Activated CD4-positive, alpha-beta T cell treated with anti-CD3 and anti-CD28 coated beads, Interleukin-2, amount 10 ng/mL, durations not matched to agents 24 days and 14 days (primary cell): ENCODE measurements at regions of chr10 and their contacts with region 1.

Region 1: GRCh38 chr10:119207367-119207668 is at the start of gene GRK5:
- DNase-seq: peak; percentile 99
- H3K4me3 Mint-ChIP-seq: peak within 1 kb of the TSS; percentile 92
- H3K27ac Mint-ChIP-seq: peak within 1 kb of the TSS; percentile 98
- H3K4me1 Mint-ChIP-seq: peaks cover 38% of the 10 kb centered on the region
- H3K27me3 Mint-ChIP-seq: no peaks in the 10 kb centered on the region
- total RNA-seq, gene GRK5: 25.6 and 27.3 TPM in 2 replicates

Region 2: DNA sequence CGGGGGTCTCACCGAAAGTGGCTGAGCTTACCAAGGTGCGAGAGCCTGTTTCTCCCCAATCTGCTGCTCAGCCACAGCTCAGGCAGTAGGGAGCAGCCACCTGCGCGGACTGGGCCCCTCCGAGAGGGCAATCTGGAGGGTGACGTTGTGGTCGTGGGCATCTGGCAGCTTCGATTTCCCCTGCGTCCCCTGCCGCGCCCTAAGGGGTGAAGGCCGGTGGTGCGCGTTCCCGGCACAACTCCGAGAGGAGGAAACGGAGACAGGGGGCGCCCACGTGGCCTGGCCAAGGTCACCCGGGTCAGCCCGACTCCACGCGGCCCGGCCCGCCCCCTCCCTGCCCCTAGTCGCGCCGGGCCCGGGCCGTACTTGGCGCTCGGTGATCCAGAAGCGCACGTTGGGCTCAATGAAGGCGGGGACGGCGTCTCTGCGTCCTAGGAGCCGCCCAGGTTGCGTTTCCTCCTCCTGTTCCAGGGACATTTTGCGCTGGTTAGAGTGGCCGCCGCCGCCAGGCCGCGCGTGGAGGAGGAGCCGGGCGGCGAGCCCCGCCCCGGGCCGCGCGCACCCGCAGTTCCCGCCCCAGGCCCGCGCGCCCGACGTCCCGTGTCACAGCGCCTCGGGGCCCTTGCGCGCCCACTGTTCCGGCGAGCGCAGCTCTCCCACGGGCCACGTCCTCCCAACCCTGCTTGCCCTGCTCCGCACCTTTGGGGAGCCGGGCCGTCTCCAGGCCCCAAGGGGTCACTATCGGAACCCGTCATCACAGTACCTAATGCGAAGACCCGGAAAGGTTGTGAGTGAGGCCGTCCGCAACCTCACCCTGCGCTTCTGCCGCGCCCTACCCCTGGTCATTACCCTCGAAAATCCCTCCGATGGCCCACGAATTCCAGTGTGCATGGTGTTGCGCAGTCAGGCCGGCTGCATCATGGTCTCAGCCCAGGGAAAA is 41.9 kb before region 1 on chr10 and contains the start of gene SFXN4:
- intact Hi-C with region 1: loop called (anchors 1 kb)
- DNase-seq: peak; percentile 96
- H3K4me3 Mint-ChIP-seq: peak within 1 kb of the TSS; percentile 90
- H3K27ac Mint-ChIP-seq: peak within 1 kb of the TSS; percentile 95
- H3K4me1 Mint-ChIP-seq: peaks cover 35% of the 10 kb centered on the region
- H3K27me3 Mint-ChIP-seq: no peaks in the 10 kb centered on the region
- total RNA-seq, gene SFXN4: 58.1 and 63.0 TPM in 2 replicates

Region 3: DNA sequence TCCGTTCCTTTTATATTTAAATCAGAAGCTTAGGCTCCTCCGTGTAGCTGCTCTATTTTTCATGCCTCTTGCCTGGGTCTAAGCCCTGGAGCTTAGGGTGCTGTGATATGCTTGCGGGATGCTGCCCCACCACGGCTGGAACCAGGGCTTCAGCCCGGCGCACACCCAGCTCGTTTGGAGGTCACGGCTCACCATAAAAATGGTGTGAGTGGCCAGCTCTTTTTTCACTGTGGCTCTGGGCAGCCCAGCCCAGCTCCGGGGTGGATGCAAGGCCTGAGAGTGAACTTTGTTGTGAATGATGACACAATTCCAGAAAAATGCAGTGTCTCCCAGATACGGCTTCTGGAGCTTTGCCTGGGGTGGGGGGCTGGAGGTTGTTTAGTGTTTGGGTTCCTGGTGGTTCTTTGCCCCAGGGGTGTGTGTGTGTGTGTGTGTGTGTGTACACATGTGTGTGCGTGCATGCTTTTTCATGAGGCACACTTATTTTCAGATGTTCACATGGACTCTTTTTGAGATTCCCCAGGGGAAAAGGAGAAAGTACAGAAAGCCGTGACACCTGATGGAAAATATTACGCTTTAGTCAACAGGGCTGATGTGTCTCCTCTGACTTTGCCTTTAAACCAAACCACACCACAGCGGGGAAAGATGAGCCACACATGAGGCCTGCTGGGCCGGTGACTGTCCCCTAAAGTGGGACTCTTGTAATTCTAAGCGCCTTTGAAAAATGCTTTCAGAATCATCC is 46.3 kb after region 1 on chr10:
- intact Hi-C with region 1: loop called (anchors 2 kb)
- DNase-seq: peak; percentile 74
- H3K4me3 Mint-ChIP-seq: peak overlapping the region; percentile 24
- H3K27ac Mint-ChIP-seq: peak overlapping the region; percentile 92
- H3K4me1 Mint-ChIP-seq: peaks cover 44% of the 10 kb centered on the region
- H3K27me3 Mint-ChIP-seq: no peaks in the 10 kb centered on the region

Region 4: GRCh38 chr10:119416855-119417254 is 209.5 kb after region 1 on chr10:
- intact Hi-C with region 1: loop called (anchors 1 kb)
- DNase-seq: peak; percentile 90
- H3K4me3 Mint-ChIP-seq: no peak overlapping the region
- H3K27ac Mint-ChIP-seq: no peak overlapping the region
- H3K4me1 Mint-ChIP-seq: peaks cover 1% of the 10 kb centered on the region
- H3K27me3 Mint-ChIP-seq: no peaks in the 10 kb centered on the region

Region 5: GRCh38 chr10:119596537-119597404 is 389.5 kb after region 1 on chr10 and contains the start of gene TIAL1:
- intact Hi-C with region 1: loop called (anchors 1 kb)
- DNase-seq: peak; percentile 97
- H3K4me3 Mint-ChIP-seq: peak within 1 kb of the TSS; percentile 90
- H3K27ac Mint-ChIP-seq: peak within 1 kb of the TSS; percentile 94
- H3K4me1 Mint-ChIP-seq: peaks cover 45% of the 10 kb centered on the region
- H3K27me3 Mint-ChIP-seq: no peaks in the 10 kb centered on the region
- total RNA-seq, gene TIAL1: 212 and 218 TPM in 2 replicates